ENCODE measurements at regions of chr11 and their contacts with region 1.

Region 1: GRCh38 chr11:115334932-115335788 is 169.1 kb downstream of the CADM1 start:
- DNase-seq: no peak
- ATAC-seq: no peak
- H3K4me3 ChIP-seq: no peak overlapping the region
- H3K27ac ChIP-seq: no peak overlapping the region
- H3K4me1 ChIP-seq: no peaks in the 10 kb centered on the region
- H3K27me3 ChIP-seq: no peaks in the 10 kb centered on the region
- CTCF ChIP-seq: peak in 4 of 5 experiments; percentile 56 to 71 (median 65)
- POLR2A ChIP-seq: no peak

Region 2: GRCh38 chr11:115496917-115497702 is 161.9 kb after region 1 on chr11:
- in situ Hi-C with region 1: loop called (anchors 5 to 10 kb)
- intact Hi-C with region 1: no loop called
- DNase-seq: no peak
- ATAC-seq: no peak
- H3K4me3 ChIP-seq: no peak overlapping the region
- H3K27ac ChIP-seq: no peak overlapping the region
- H3K4me1 ChIP-seq: peaks cover 0 to 6% of the 10 kb centered on the region in 2 donors
- H3K27me3 ChIP-seq: peaks cover 0 to 5% (median 0%) of the 10 kb centered on the region in 3 donors
- CTCF ChIP-seq: no peak
- POLR2A ChIP-seq: no peak

Region 3: GRCh38 chr11:115504276-115505158 is 169.4 kb after region 1 on chr11 and contains the start of gene CADM1:
- in situ Hi-C with region 1: loop called (anchors 5 to 10 kb)
- intact Hi-C with region 1: loop called (anchors 1 kb)
- DNase-seq: peak; percentile 93 to 95
- ATAC-seq: peak; percentile 82 to 84
- H3K4me3 ChIP-seq: peak within 1 kb of the TSS; percentile 66 to 75 (median 74)
- H3K27ac ChIP-seq: peak within 1 kb of the TSS; percentile 83 to 87 (median 86)
- H3K4me1 ChIP-seq: peaks cover 6 to 11% of the 10 kb centered on the region in 2 donors
- H3K27me3 ChIP-seq: peaks cover 0 to 8% (median 0%) of the 10 kb centered on the region in 3 donors
- CTCF ChIP-seq: peak; percentile 48 to 70 (median 60)
- POLR2A ChIP-seq: peak; percentile 92 to 96
- total RNA-seq, gene CADM1: 1.2 to 2.5 (median 2.2) TPM

Region 4: GRCh38 chr11:115678942-115679341 is 343.8 kb after region 1 on chr11:
- in situ Hi-C with region 1: no loop called
- intact Hi-C with region 1: loop called (anchors 5 kb)
- DNase-seq: peak in 1 of 2 donors; percentile 18
- ATAC-seq: no peak
- H3K4me3 ChIP-seq: no peak overlapping the region
- H3K27ac ChIP-seq: no peak overlapping the region
- H3K4me1 ChIP-seq: no peaks in the 10 kb centered on the region
- H3K27me3 ChIP-seq: no peaks in the 10 kb centered on the region
- CTCF ChIP-seq: peak in 1 of 5 experiments; percentile 28
- POLR2A ChIP-seq: no peak

Region 5: DNA sequence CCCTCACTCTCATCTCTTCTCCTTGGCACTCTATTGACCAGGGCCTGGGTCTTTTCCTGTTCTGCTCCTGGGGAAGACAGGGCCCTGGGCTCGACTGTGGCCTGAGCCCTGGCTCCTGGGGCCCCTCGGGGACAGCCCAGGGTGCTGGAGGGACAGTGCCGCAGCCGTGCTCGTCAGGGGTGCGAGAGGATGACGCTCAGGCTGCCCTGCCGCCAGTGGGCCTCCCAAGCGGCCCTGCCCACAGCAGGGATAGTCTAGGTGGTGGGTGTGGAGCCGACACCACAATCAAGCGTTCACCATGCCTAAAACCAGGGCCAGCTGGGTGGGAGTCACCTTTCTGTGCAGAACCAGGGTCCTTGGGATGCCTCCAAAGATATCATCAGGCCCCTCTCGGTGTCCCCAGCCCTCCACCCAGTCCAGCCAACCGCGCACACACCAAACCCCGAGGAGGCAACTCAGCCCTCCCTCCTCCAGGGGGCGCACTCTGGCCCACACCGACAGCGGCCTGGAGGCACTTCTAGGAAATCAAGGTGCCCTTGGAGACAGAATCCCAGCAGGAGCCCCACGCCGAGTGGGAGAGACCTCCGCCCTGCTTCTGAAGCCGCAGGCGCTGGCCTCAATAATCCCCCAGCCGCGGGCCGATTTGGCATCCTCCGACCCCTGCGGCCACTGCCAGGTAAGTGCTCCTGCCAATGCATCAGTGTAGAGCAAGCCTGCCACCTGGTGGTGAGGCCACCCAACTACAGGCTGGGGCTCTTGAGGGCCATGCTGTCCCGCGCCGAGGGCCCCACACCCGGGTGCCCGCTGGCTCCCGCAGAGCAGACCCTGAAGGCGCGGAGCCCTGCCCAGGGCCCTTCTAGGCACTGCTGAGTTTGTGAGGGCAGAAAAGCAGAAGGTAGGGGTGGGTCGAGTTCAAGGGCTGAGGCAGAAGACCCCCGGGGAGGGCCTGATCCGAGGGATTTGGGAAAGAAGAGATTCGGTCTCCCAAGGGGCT is 941.2 kb after region 1 on chr11:
- in situ Hi-C with region 1: loop called in 2 of 4 experiments (anchors 10 to 25 kb)
- intact Hi-C with region 1: no loop called
- DNase-seq: peak in 1 of 2 donors; percentile 52
- ATAC-seq: peak in 1 of 2 donors; percentile 69
- H3K4me3 ChIP-seq: peak overlapping the region in 3 of 4 donors; percentile 19 to 47 (median 31)
- H3K27ac ChIP-seq: no peak overlapping the region
- H3K4me1 ChIP-seq: no peaks in the 10 kb centered on the region
- H3K27me3 ChIP-seq: no peaks in the 10 kb centered on the region
- CTCF ChIP-seq: peak; percentile 64 to 96 (median 87)
- POLR2A ChIP-seq: no peak